ENCODE measurements at regions of chr21 and their contacts with region 1.

Region 1: DNA sequence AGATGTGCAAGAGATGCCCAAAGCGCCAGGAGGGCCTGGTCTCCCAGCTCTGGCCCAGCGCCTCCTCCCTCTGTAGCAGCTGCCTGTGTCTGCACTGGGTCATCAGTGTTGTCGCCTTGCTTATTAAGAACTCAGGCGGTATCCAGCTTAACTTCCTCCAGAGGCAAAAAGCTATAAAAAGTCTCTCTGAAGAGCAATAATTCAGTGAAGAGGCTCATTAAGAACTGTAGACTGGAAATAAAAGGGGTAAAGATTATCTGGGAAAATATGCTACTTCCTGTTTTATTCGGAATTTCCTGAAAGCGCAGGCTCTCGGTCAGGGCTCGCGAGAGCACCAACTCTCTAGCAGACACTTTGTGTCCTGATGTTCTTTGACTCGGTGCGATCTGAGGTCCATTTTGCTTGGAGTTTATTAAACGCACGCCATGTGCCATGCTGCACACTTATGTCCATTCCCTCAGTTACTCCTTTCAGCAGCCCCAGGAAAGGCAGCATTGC is 70.4 kb downstream of the MRPS6 start:
- DNase-seq: no peak
- ATAC-seq: no peak
- H3K4me3 ChIP-seq: no peak overlapping the region
- H3K4me3 Mint-ChIP-seq: no peak overlapping the region
- H3K27ac ChIP-seq: no peak overlapping the region
- H3K27ac Mint-ChIP-seq: no peak overlapping the region
- H3K4me1 ChIP-seq: no peaks in the 10 kb centered on the region
- H3K4me1 Mint-ChIP-seq: peaks cover 24% of the 10 kb centered on the region
- H3K27me3 ChIP-seq: no peaks in the 10 kb centered on the region
- H3K27me3 Mint-ChIP-seq: no peaks in the 10 kb centered on the region
- CTCF ChIP-seq: no peak

Region 2: GRCh38 chr21:33884376-33885171 is 259.2 kb before region 1 on chr21:
- CTCF ChIA-PET with region 1: no interaction called
- POLR2A ChIA-PET with region 1: no interaction called
- intact Hi-C with region 1: no loop called
- DNase-seq: no peak
- ATAC-seq: no peak
- H3K4me3 ChIP-seq: no peak overlapping the region
- H3K4me3 Mint-ChIP-seq: no peak overlapping the region
- H3K27ac ChIP-seq: no peak overlapping the region
- H3K27ac Mint-ChIP-seq: no peak overlapping the region
- H3K4me1 ChIP-seq: no peaks in the 10 kb centered on the region
- H3K4me1 Mint-ChIP-seq: no peaks in the 10 kb centered on the region
- H3K27me3 ChIP-seq: no peaks in the 10 kb centered on the region
- H3K27me3 Mint-ChIP-seq: peaks cover 5% of the 10 kb centered on the region
- CTCF ChIP-seq: no peak

Region 3: GRCh38 chr21:33993286-33994231 is 150.2 kb before region 1 on chr21:
- CTCF ChIA-PET with region 1: no interaction called
- POLR2A ChIA-PET with region 1: no interaction called
- intact Hi-C with region 1: loop called in 1 of 2 experiments (anchors 5 kb)
- DNase-seq: no peak
- ATAC-seq: no peak
- H3K4me3 ChIP-seq: no peak overlapping the region
- H3K4me3 Mint-ChIP-seq: no peak overlapping the region
- H3K27ac ChIP-seq: no peak overlapping the region
- H3K27ac Mint-ChIP-seq: no peak overlapping the region
- H3K4me1 ChIP-seq: peaks cover 6% of the 10 kb centered on the region
- H3K4me1 Mint-ChIP-seq: peaks cover 14% of the 10 kb centered on the region
- H3K27me3 ChIP-seq: no peaks in the 10 kb centered on the region
- H3K27me3 Mint-ChIP-seq: no peaks in the 10 kb centered on the region
- CTCF ChIP-seq: no peak

Region 4: DNA sequence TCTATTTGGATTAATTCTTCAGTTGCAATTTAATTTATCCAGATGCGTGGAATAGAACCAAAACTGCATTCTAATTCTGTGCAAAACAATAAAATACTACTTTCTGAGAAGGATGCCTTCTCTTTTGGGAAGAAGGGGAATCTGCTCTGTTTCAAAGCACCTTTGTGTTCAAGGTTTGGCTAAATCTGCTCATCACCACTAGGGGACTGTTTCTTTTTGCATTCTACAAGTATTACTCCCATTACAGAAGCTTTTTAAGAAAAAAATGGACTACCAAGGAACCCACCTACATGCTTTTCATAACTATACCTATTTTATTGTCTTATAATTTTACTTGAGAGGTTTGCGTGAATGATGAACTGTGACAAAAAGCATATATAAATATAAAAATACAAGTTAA is 52.1 kb before region 1 on chr21:
- CTCF ChIA-PET with region 1: no interaction called
- POLR2A ChIA-PET with region 1: no interaction called
- intact Hi-C with region 1: no loop called
- DNase-seq: peak in 2 of 9 experiments; percentile 17 to 26
- ATAC-seq: no peak
- H3K4me3 ChIP-seq: no peak overlapping the region
- H3K4me3 Mint-ChIP-seq: no peak overlapping the region
- H3K27ac ChIP-seq: no peak overlapping the region
- H3K27ac Mint-ChIP-seq: peak overlapping the region; percentile 4
- H3K4me1 ChIP-seq: peaks cover 61% of the 10 kb centered on the region
- H3K4me1 Mint-ChIP-seq: peaks cover 63% of the 10 kb centered on the region
- H3K27me3 ChIP-seq: no peaks in the 10 kb centered on the region
- H3K27me3 Mint-ChIP-seq: no peaks in the 10 kb centered on the region
- CTCF ChIP-seq: peak; percentile 47

Measured in CD8-positive, alpha-beta T cell (primary cell).